Stomach (tissue), 19 donors: ENCODE measurements at regions of chr2 and their contacts with region 1.

Region 1: GRCh38 chr2:16613539-16614011 is 52.1 kb downstream of the CYRIA start:
- DNase-seq: peak in 1 of 2 donors; percentile 43
- H3K4me3 ChIP-seq: no peak overlapping the region
- H3K27ac ChIP-seq: no peak overlapping the region
- H3K4me1 ChIP-seq: peaks cover 29 to 47% (median 39%) of the 10 kb centered on the region in 4 donors
- H3K27me3 ChIP-seq: no peaks in the 10 kb centered on the region
- CTCF ChIP-seq: peak in 5 of 7 experiments; percentile 30 to 72 (median 60)
- EP300 ChIP-seq: no peak
- POLR2A ChIP-seq: no peak

Region 2: DNA sequence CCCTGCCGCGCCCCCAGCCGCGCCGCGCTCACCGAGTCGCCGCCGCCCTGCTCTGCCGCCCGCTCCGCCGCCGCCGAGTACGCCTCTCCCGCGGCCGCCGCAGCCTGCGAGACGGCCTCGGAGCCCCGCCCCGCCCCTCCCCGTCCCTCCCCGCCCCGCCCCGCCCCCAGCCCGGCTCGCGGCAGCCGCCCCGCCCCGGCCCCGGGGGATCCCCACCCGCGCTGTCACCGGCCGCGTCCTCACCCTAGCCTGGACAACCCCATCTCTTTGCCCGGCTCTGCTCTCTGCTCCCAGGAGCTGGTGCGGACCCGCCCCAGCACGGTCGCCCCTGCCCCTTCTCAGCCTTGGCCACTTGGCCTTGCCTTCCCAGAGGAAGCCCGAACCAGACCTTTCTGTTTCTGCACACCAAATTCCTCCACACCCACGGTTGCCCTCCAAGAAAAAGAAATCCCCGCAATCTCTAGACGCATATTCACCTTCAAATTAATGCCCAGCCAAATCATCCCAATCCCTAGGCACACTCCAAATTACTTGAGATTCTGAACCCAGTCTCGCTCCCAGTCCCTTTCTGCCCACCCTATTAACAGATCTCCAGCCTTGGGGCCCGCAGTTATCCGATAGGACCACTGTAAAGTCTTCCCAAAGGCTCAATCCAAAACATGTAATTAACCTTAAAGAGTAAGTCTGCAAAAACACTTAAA is 52.3 kb after region 1 on chr2 and contains the start of gene CYRIA:
- intact Hi-C with region 1: loop called (anchors 5 kb)
- DNase-seq: peak; percentile 73 to 86
- H3K4me3 ChIP-seq: peak within 1 kb of the TSS; percentile 62 to 80 (median 66)
- H3K27ac ChIP-seq: peak within 1 kb of the TSS; percentile 45 to 82 (median 74)
- H3K4me1 ChIP-seq: peaks cover 15 to 53% (median 41%) of the 10 kb centered on the region in 4 donors
- H3K27me3 ChIP-seq: no peaks in the 10 kb centered on the region
- CTCF ChIP-seq: no peak
- EP300 ChIP-seq: no peak
- POLR2A ChIP-seq: no peak
- total RNA-seq, gene CYRIA: under 0.01 to 12.7 (median 3.3) TPM

Region 3: DNA sequence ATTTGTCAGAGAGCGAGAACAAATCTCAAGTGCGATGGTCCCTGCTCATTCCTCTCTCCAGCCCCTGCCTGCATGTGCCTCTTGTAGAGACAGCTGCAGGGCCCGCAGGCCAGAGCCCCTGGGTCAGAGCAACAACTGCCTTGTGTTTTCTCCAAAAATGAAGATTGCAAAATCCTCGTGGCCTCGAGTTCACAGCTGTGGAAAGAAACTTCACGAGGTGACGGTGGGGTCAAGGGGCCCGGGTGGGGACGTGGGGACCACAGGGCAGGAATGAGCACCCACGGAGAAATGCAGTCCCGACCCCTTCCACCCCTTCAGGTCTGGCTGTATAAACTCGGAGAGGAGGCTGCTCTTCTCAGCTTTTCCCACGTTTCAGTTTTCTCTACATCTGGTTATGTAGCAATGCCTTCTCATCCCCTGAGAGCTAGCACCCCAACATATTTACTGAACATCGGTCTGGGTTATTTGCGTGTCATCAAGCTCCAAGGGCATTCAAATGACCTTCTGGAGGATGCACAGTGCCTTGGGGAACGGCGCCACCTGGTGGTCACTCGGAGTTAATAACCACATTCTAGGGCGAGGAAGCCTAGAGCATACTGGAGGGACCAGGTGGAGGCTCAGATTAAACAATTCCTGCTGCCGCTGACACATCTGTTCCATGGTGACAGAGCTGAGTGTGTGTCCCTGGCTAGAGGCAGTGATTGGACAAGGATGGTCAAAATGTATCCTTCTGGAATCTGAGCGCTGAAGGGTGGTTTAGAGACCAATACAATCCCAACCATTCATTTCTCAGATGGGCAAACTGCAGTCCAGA is 143.5 kb after region 1 on chr2:
- intact Hi-C with region 1: loop called (anchors 5 kb)
- DNase-seq: peak; percentile 84 to 91
- H3K4me3 ChIP-seq: no peak overlapping the region
- H3K27ac ChIP-seq: peak overlapping the region in 1 of 5 donors; percentile 34
- H3K4me1 ChIP-seq: peaks cover 0 to 16% (median 5%) of the 10 kb centered on the region in 4 donors
- H3K27me3 ChIP-seq: no peaks in the 10 kb centered on the region
- CTCF ChIP-seq: peak in 6 of 7 experiments; percentile 18 to 95 (median 90)
- EP300 ChIP-seq: no peak
- POLR2A ChIP-seq: no peak

Region 4: GRCh38 chr2:17557596-17557995 is 944.0 kb after region 1 on chr2:
- intact Hi-C with region 1: no loop called
- DNase-seq: no peak
- H3K4me3 ChIP-seq: no peak overlapping the region
- H3K27ac ChIP-seq: no peak overlapping the region
- H3K4me1 ChIP-seq: no peaks in the 10 kb centered on the region
- H3K27me3 ChIP-seq: no peaks in the 10 kb centered on the region
- CTCF ChIP-seq: no peak
- EP300 ChIP-seq: no peak
- POLR2A ChIP-seq: no peak